IMR-90 (cell line): ENCODE measurements at regions of chr6 and their contacts with region 1.

Region 1: DNA sequence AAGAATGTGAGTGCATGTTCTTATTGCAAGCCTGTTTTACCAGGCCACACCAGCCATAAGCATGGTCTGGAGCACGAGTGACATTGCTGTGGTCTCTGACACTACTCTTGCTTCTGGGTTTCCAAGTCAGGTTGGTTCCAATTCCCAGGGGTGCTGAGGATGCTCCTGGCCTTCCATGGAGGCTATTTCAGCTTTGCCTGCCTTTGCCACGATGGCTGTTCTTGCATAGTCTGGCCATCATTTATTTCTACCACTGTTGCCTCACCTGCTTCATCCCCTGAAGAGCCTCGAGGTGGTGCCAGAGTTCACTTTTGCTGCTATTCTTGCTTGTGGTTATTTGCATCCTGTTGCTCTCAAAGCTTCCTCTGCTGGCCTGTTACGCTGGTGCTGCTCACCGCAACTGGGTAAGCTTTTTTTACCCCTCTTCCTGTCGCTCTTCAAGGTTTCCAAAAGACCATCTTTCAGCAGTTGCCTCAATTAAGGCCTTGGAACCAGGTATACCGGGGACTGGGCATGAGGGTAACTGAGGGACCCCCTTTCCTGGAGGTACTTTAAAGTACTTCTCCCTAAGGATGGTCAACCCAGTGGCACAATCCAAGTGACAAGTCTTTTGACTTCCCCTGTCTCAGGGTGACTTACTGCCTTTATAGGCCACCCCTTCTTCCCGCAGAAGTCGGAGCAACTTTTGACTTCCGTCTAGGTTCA is 64.5 kb downstream of the AKAP7 start:
- DNase-seq: peak; percentile 47
- ATAC-seq: peak; percentile 77
- H3K4me3 ChIP-seq: no peak overlapping the region
- H3K27ac ChIP-seq: no peak overlapping the region
- H3K4me1 ChIP-seq: no peaks in the 10 kb centered on the region
- H3K27me3 ChIP-seq: no peaks in the 10 kb centered on the region
- CTCF ChIP-seq: peak; percentile 48
- POLR2A ChIP-seq: no peak
- RAD21 ChIP-seq: peak; percentile 52

Region 2: GRCh38 chr6:131336538-131337080 is 136.9 kb after region 1 on chr6:
- CTCF ChIA-PET with region 1: no interaction called
- POLR2A ChIA-PET with region 1: no interaction called
- dilution Hi-C with region 1: no loop called
- in situ Hi-C with region 1: no loop called
- intact Hi-C with region 1: no loop called
- DNase-seq: no peak
- ATAC-seq: no peak
- H3K4me3 ChIP-seq: no peak overlapping the region
- H3K27ac ChIP-seq: no peak overlapping the region
- H3K4me1 ChIP-seq: no peaks in the 10 kb centered on the region
- H3K27me3 ChIP-seq: peaks cover 3% of the 10 kb centered on the region
- CTCF ChIP-seq: no peak
- POLR2A ChIP-seq: no peak
- RAD21 ChIP-seq: no peak

Region 3: GRCh38 chr6:131412960-131413830 is 213.5 kb after region 1 on chr6:
- CTCF ChIA-PET with region 1: no interaction called
- POLR2A ChIA-PET with region 1: no interaction called
- dilution Hi-C with region 1: no loop called
- in situ Hi-C with region 1: no loop called
- intact Hi-C with region 1: no loop called
- DNase-seq: no peak
- ATAC-seq: no peak
- H3K4me3 ChIP-seq: no peak overlapping the region
- H3K27ac ChIP-seq: no peak overlapping the region
- H3K4me1 ChIP-seq: no peaks in the 10 kb centered on the region
- H3K27me3 ChIP-seq: peaks cover 2% of the 10 kb centered on the region
- CTCF ChIP-seq: no peak
- POLR2A ChIP-seq: no peak
- RAD21 ChIP-seq: no peak

Region 4: DNA sequence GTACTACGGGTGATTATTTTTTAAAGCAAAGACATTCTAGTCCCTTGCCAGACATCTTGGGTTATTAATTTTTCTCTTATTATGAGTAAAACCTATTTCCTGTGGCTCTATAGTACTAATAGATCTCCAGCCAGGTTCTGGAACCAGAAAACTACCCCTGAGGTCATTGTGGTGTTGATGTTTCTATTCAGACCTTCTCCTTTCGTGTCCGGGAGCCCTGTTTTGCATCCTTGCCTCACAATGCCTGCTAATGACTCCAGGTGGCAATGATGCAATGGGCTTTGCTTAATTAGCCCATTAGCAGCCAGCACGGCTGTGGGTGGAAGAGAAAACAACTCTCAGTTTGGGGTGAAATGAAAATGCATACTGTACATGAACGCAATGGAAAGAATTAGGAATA is 310.4 kb after region 1 on chr6:
- CTCF ChIA-PET with region 1: no interaction called
- POLR2A ChIA-PET with region 1: no interaction called
- dilution Hi-C with region 1: no loop called
- in situ Hi-C with region 1: no loop called
- intact Hi-C with region 1: loop called (anchors 5 kb)
- DNase-seq: no peak
- ATAC-seq: no peak
- H3K4me3 ChIP-seq: no peak overlapping the region
- H3K27ac ChIP-seq: no peak overlapping the region
- H3K4me1 ChIP-seq: no peaks in the 10 kb centered on the region
- H3K27me3 ChIP-seq: peaks cover 2% of the 10 kb centered on the region
- CTCF ChIP-seq: no peak
- POLR2A ChIP-seq: no peak
- RAD21 ChIP-seq: no peak